B cell (primary cell): ENCODE measurements at regions of chr18 and their contacts with region 1.

Region 1: GRCh38 chr18:13558124-13558523 is 168.2 kb downstream of the FAM210A start:
- DNase-seq: peak; percentile 84
- ATAC-seq: peak; percentile 65
- H3K4me3 ChIP-seq: no peak overlapping the region
- H3K4me3 Mint-ChIP-seq: peak overlapping the region; percentile 48
- H3K27ac ChIP-seq: no peak overlapping the region
- H3K27ac Mint-ChIP-seq: peak overlapping the region; percentile 71
- H3K4me1 ChIP-seq: peaks cover 19 to 24% of the 10 kb centered on the region in 2 donors
- H3K4me1 Mint-ChIP-seq: peaks cover 29% of the 10 kb centered on the region
- H3K27me3 ChIP-seq: no peaks in the 10 kb centered on the region
- H3K27me3 Mint-ChIP-seq: no peaks in the 10 kb centered on the region
- CTCF ChIP-seq: peak; percentile 77

Region 2: DNA sequence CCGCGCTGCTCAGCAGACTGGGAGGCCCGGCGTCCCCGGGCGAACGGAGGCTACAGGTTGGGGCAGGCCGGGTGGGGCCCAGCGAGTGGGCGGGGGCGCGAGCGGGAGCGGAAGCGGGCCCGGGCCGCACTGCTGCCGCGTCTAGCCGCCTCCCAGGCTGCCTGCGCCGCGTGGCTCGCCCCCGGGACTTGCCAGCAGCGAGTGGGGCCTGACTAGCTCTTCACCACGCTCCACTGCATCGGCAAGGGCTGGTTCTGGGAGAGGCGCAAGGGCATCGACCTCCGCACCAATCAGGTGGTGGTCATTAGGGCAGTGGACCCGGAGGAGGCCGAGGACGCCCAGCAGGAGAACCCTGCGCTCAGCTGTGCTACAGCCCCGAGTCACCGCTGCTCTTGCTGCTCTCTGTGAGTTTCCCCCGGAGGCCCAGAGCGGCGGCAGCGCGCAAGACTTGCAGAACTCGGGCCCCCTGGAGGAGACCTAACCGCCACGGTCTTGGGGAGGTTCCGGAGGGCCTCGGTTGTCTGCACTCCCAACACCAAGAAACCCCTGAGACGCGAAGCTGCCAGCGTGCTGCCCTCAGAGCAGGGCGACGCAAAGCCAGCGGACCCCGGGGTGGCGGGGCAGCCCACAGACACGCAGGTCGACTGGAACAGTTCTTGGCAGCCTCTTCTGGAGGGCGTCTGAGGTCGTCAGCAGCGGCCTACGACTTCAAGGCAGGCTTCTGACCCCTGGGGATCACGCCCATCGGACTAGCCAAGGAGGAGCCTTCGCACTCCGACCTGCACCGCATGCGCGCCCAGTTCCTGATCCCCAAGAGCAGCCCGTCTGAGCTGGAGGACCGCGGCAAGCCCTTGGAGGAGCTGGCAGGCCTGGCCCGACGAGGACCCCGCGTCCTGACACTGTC is 646.8 kb before region 1 on chr18:
- CTCF ChIA-PET with region 1: no interaction called
- POLR2A ChIA-PET with region 1: no interaction called
- intact Hi-C with region 1: no loop called
- DNase-seq: peak; percentile 68
- ATAC-seq: peak; percentile 87
- H3K4me3 ChIP-seq: peak overlapping the region in 4 of 5 experiments; percentile 43 to 67 (median 54)
- H3K4me3 Mint-ChIP-seq: peak overlapping the region; percentile 84
- H3K27ac ChIP-seq: no peak overlapping the region
- H3K27ac Mint-ChIP-seq: no peak overlapping the region
- H3K4me1 ChIP-seq: peaks cover 0 to 13% of the 10 kb centered on the region in 2 donors
- H3K4me1 Mint-ChIP-seq: peaks cover 8% of the 10 kb centered on the region
- H3K27me3 ChIP-seq: peaks cover 0 to 14% (median 2%) of the 10 kb centered on the region in 4 experiments
- H3K27me3 Mint-ChIP-seq: peaks cover 12% of the 10 kb centered on the region
- CTCF ChIP-seq: no peak

Region 3: DNA sequence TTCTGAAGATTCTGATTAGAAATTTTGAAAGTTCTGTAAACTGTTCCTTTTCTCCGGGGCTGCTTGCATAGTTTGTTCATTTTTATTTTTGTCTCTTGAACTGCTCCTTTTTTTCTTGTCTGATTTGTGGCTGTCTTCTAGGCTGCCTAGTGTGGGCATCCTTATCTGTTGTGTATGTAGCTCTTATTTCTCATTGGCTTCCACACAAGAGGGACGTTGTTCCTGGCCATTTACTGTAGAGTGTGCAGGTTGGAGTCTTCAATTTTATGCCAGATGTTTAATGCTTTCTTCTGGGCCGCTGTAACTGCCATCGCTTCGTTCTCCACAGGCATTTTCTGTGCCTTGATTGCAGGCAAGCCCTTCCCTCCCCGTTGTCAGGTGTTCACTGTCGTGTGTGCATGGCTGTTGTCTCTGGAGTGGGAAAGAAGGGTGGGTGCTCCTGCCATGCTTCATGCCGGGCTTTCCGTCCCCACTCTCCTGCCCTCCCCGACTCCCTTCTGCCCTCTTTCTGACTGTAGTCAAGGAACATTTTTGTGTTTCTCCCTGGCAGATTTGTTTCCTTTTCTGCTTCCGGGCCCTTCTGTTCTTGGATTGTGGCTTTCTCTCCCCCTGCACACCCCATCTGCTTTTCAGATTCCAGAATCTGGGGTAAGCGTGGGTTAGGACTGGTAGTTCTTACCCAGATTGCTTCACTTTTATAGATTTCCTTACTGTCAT is 551.4 kb before region 1 on chr18:
- CTCF ChIA-PET with region 1: no interaction called
- POLR2A ChIA-PET with region 1: no interaction called
- intact Hi-C with region 1: no loop called
- DNase-seq: no peak
- ATAC-seq: no peak
- H3K4me3 ChIP-seq: no peak overlapping the region
- H3K4me3 Mint-ChIP-seq: no peak overlapping the region
- H3K27ac ChIP-seq: no peak overlapping the region
- H3K27ac Mint-ChIP-seq: no peak overlapping the region
- H3K4me1 ChIP-seq: no peaks in the 10 kb centered on the region
- H3K4me1 Mint-ChIP-seq: peaks cover 11% of the 10 kb centered on the region
- H3K27me3 ChIP-seq: no peaks in the 10 kb centered on the region
- H3K27me3 Mint-ChIP-seq: no peaks in the 10 kb centered on the region
- CTCF ChIP-seq: no peak

Region 4: GRCh38 chr18:13539050-13539449 is 19.1 kb before region 1 on chr18:
- CTCF ChIA-PET with region 1: interaction called, 54 read pairs
- POLR2A ChIA-PET with region 1: no interaction called
- intact Hi-C with region 1: no loop called
- DNase-seq: peak; percentile 89
- ATAC-seq: peak; percentile 83
- H3K4me3 ChIP-seq: peak overlapping the region in 3 of 5 experiments; percentile 0 to 43 (median 9)
- H3K4me3 Mint-ChIP-seq: peak overlapping the region; percentile 82
- H3K27ac ChIP-seq: peak overlapping the region; percentile 64 to 72
- H3K27ac Mint-ChIP-seq: peak overlapping the region; percentile 87
- H3K4me1 ChIP-seq: peaks cover 38 to 45% of the 10 kb centered on the region in 2 donors
- H3K4me1 Mint-ChIP-seq: peaks cover 48% of the 10 kb centered on the region
- H3K27me3 ChIP-seq: no peaks in the 10 kb centered on the region
- H3K27me3 Mint-ChIP-seq: no peaks in the 10 kb centered on the region
- CTCF ChIP-seq: no peak

Region 5: DNA sequence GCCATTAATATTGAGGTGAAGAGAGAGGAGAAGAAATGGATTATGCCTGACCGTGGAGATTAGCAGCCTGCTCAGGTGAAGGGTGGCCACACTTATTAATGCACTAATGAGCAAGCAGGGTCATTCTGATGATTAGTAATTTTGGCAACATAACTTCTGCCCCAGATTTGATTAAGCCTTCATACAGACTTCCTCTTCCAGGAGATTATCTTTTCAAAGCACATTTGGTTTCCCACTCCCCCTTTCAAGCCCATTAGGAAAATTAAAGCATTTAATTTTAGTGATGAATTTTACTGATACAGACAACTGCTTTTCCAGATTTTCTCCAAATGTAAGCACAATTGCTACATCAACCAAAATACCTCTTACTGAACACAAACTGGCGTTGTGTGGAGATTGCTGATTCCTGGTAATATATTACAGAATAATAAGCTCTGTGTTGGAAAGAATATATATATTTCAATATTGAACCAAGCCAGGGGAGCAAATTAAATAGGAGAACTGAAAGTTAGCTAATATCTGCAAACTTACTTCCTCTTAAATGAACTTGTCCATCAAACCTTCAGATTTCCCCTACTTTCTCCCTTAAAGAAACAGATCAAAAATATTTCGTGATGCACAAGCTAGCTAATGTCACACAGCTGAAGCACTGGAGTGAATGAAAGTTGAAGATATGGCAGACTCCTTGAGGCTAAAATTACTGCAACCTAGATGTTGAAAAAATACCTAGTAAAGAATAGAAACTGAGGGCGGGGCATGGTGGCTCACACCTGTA is 27.4 kb after region 1 on chr18:
- CTCF ChIA-PET with region 1: interaction called, 18 read pairs
- POLR2A ChIA-PET with region 1: no interaction called
- intact Hi-C with region 1: loop called (anchors 1 kb)
- DNase-seq: peak; percentile 77
- ATAC-seq: peak; percentile 78
- H3K4me3 ChIP-seq: peak overlapping the region in 1 of 5 experiments; percentile 21
- H3K4me3 Mint-ChIP-seq: peak overlapping the region; percentile 74
- H3K27ac ChIP-seq: peak overlapping the region; percentile 50 to 76
- H3K27ac Mint-ChIP-seq: peak overlapping the region; percentile 83
- H3K4me1 ChIP-seq: peaks cover 31 to 34% of the 10 kb centered on the region in 2 donors
- H3K4me1 Mint-ChIP-seq: peaks cover 50% of the 10 kb centered on the region
- H3K27me3 ChIP-seq: no peaks in the 10 kb centered on the region
- H3K27me3 Mint-ChIP-seq: no peaks in the 10 kb centered on the region
- CTCF ChIP-seq: no peak

Region 6: GRCh38 chr18:13638719-13639595 is 80.8 kb after region 1 on chr18:
- CTCF ChIA-PET with region 1: interaction called, 344 read pairs
- POLR2A ChIA-PET with region 1: interaction called, 3 read pairs
- intact Hi-C with region 1: no loop called
- DNase-seq: no peak
- ATAC-seq: no peak
- H3K4me3 ChIP-seq: no peak overlapping the region
- H3K4me3 Mint-ChIP-seq: no peak overlapping the region
- H3K27ac ChIP-seq: no peak overlapping the region
- H3K27ac Mint-ChIP-seq: no peak overlapping the region
- H3K4me1 ChIP-seq: no peaks in the 10 kb centered on the region
- H3K4me1 Mint-ChIP-seq: no peaks in the 10 kb centered on the region
- H3K27me3 ChIP-seq: no peaks in the 10 kb centered on the region
- H3K27me3 Mint-ChIP-seq: no peaks in the 10 kb centered on the region
- CTCF ChIP-seq: no peak

Region 7: GRCh38 chr18:13813271-13813849 is 255.2 kb after region 1 on chr18:
- CTCF ChIA-PET with region 1: interaction called, 11 read pairs
- POLR2A ChIA-PET with region 1: no interaction called
- intact Hi-C with region 1: no loop called
- DNase-seq: peak; percentile 56
- ATAC-seq: peak; percentile 64
- H3K4me3 ChIP-seq: no peak overlapping the region
- H3K4me3 Mint-ChIP-seq: no peak overlapping the region
- H3K27ac ChIP-seq: no peak overlapping the region
- H3K27ac Mint-ChIP-seq: no peak overlapping the region
- H3K4me1 ChIP-seq: no peaks in the 10 kb centered on the region
- H3K4me1 Mint-ChIP-seq: no peaks in the 10 kb centered on the region
- H3K27me3 ChIP-seq: peaks cover 0 to 3% (median 0%) of the 10 kb centered on the region in 4 experiments
- H3K27me3 Mint-ChIP-seq: peaks cover 4% of the 10 kb centered on the region
- CTCF ChIP-seq: peak; percentile 93